ENCODE measurements at regions of chr12 and their contacts with region 1.

Region 1: DNA sequence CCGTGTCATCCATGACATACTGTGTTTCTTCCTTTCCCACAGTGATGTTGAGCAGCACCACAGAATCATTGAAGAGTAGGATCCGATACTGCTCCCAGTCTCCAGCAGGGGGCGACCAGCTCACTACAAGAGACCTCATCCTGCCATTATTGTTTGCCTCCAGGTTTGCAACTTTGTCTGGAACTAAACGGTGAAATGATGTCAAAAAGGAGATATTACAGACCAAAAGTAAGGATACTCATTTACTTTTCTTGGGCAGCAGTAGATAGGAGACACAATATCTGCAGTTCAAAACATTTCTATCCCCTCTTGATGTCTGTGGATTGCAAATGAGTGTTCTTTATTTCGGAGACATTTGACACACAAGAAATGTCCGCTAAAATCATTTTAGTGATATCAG is 47.2 kb downstream of the PTPRB start:
- DNase-seq: peak; percentile 74
- ATAC-seq: peak; percentile 84
- H3K4me3 ChIP-seq: no peak overlapping the region
- H3K27ac ChIP-seq: no peak overlapping the region
- H3K4me1 ChIP-seq: no peaks in the 10 kb centered on the region
- H3K27me3 ChIP-seq: no peaks in the 10 kb centered on the region
- CTCF ChIP-seq: peak; percentile 96

Region 2: DNA sequence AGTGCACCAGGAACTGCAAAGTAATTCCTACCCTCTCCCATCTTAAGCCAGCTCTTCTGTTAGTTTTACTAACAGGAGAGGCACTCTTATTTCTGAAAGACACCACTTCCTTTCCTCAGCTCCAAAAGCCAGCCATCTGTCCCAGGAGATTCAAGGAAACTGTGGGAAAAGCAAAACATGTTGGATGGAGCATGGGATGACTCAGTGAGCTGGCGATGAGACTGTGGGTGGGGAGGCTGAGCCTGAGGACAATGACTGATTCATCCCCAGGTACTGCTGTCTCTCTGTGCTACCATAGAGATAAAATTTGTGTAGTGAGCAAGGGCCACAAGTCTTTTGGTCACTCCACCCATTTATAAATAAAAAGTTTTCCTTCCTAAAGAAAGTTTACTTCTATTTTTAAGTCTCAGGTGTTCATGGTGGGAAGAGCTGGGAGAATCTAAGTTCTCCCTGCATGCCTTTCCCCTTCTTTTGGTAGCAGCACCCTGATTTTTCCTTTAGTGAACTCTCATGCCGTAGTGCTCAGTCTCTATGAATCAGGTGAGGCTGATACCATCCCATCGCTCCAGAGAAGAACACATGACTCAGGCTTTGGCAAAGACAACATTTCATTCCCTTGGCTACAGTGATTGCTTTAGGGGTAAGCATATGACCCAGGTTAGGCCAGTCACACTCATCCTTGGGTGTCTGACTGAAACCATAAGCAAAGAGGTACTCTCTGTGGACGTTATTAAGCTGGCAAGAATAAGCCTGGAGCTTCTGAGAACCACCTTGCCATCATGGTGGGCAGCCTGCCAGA is 623.4 kb before region 1 on chr12:
- CTCF ChIA-PET with region 1: no interaction called
- POLR2A ChIA-PET with region 1: no interaction called
- intact Hi-C with region 1: no loop called
- DNase-seq: peak; percentile 95
- ATAC-seq: peak; percentile 99
- H3K4me3 ChIP-seq: peak overlapping the region; percentile 37; the same call in 1 of the 2 replicates
- H3K27ac ChIP-seq: peak overlapping the region; percentile 98
- H3K4me1 ChIP-seq: peaks cover 27% of the 10 kb centered on the region
- H3K27me3 ChIP-seq: no peaks in the 10 kb centered on the region
- CTCF ChIP-seq: no peak

Region 3: GRCh38 chr12:70638639-70639360 is 48.7 kb after region 1 on chr12:
- CTCF ChIA-PET with region 1: no interaction called
- POLR2A ChIA-PET with region 1: no interaction called
- intact Hi-C with region 1: loop called (anchors 2 kb)
- DNase-seq: peak; percentile 60
- ATAC-seq: peak; percentile 26
- H3K4me3 ChIP-seq: no peak overlapping the region
- H3K27ac ChIP-seq: peak overlapping the region; percentile 80
- H3K4me1 ChIP-seq: peaks cover 55% of the 10 kb centered on the region
- H3K27me3 ChIP-seq: no peaks in the 10 kb centered on the region
- CTCF ChIP-seq: no peak

Region 4: GRCh38 chr12:70719672-70720420 is 129.8 kb after region 1 on chr12:
- CTCF ChIA-PET with region 1: no interaction called
- POLR2A ChIA-PET with region 1: no interaction called
- intact Hi-C with region 1: loop called (anchors 1 kb)
- DNase-seq: peak; percentile 46
- ATAC-seq: peak; percentile 51; the same call in 1 of the 2 replicates
- H3K4me3 ChIP-seq: no peak overlapping the region
- H3K27ac ChIP-seq: no peak overlapping the region
- H3K4me1 ChIP-seq: no peaks in the 10 kb centered on the region
- H3K27me3 ChIP-seq: no peaks in the 10 kb centered on the region
- CTCF ChIP-seq: peak; percentile 98

Region 5: DNA sequence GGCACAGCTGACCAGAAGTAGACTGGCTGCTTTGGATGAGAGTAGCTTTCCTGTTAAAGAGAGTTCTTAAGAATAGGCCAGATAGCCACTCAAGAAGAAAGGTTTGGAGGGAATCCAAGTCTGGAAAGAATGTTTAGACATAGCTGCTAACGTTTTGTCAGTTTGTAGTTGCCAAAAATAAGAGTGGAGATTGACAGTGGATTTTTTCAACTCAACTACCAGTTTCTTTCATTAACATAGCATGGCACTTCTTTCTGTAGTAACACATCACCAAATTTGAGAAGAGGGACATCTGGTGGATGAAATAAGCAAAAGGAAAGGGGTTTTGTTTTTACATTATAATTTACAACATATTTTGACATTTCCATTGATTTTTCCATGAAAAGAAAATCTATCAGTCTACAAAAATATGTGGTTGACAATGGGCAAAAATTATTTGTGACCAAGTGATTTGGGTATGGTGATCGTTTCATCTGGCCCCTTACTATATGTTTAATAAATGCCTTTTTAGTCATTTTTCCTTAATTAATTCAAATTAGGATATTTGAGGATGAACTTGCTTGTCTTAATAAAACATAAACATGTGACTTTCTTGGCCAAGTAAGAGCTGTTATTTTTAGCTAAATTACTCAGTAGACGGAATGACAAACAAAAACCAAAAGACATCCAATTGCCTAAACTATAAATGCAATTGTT is 259.4 kb after region 1 on chr12:
- CTCF ChIA-PET with region 1: no interaction called
- POLR2A ChIA-PET with region 1: no interaction called
- intact Hi-C with region 1: loop called (anchors 10 kb)
- DNase-seq: peak; percentile 61
- ATAC-seq: 0 out of 2 replicates have a peak, but pooled peaks have one; percentile 22
- H3K4me3 ChIP-seq: no peak overlapping the region
- H3K27ac ChIP-seq: no peak overlapping the region
- H3K4me1 ChIP-seq: no peaks in the 10 kb centered on the region
- H3K27me3 ChIP-seq: no peaks in the 10 kb centered on the region
- CTCF ChIP-seq: peak; percentile 83

Region 6: DNA sequence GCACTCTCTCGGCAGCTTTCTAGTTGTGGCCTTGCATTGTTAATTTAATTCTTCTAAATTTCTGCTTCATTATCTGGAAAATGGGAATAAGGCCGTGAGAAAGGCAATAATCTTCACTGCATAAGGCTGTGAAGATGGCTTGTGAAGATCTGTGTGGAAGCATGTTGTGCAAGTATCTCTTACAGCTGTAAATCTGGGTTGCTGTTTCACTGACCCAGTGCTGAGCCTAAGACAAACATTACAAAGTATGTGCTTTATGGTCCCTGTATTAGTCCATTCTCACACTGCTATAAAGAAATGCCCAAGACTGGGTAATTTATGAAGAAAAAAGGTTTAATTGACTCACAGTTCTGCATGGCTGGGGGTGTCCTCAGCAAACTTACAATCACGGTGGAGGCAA is 431.4 kb after region 1 on chr12:
- CTCF ChIA-PET with region 1: no interaction called
- POLR2A ChIA-PET with region 1: interaction called, 23 read pairs
- intact Hi-C with region 1: no loop called
- DNase-seq: no peak
- ATAC-seq: no peak
- H3K4me3 ChIP-seq: no peak overlapping the region
- H3K27ac ChIP-seq: no peak overlapping the region
- H3K4me1 ChIP-seq: no peaks in the 10 kb centered on the region; the same call in 1 of the 2 replicates
- H3K27me3 ChIP-seq: no peaks in the 10 kb centered on the region
- CTCF ChIP-seq: no peak

Measured in PC-3 (cell line).